ENCODE measurements at regions of chr1 and their contacts with region 1.

Region 1: DNA sequence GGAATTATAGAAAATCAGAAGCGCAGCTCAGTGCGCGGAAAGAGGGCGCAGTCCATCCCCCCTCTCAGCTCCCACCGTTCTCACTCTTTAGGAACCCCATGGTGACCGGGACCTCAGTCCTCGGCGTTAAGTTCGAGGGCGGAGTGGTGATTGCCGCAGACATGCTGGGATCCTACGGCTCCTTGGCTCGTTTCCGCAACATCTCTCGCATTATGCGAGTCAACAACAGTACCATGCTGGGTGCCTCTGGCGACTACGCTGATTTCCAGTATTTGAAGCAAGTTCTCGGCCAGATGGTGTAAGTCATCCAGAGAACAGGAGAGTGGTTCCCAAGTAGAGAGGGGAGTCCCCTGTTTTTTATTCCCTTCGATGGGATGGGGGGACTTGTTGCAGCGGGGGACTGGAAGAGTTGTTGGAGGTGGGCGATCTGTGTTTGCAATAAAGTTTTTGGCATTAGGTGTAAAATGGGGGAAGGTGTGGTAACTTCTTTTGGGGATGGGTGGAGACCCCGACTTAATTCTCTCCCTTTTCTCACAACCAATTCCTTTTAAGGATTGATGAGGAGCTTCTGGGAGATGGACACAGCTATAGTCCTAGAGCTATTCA is 620 bp downstream of the PSMB4 start:
- DNase-seq: no peak
- ATAC-seq: peak; percentile 42
- H3K4me3 ChIP-seq: peak overlapping the region; percentile 88
- H3K27ac ChIP-seq: peak overlapping the region; percentile 83
- H3K4me1 ChIP-seq: peaks cover 9% of the 10 kb centered on the region
- H3K27me3 ChIP-seq: no peaks in the 10 kb centered on the region
- CTCF ChIP-seq: no peak
- EP300 ChIP-seq: no peak
- POLR2A ChIP-seq: no peak; the same call in 1 of the 2 replicates
- RAD21 ChIP-seq: no peak

Region 2: GRCh38 chr1:151198255-151199127 is 201.5 kb before region 1 on chr1 and contains the start of gene PIP5K1A:
- CTCF ChIA-PET with region 1: no interaction called
- POLR2A ChIA-PET with region 1: no interaction called
- RAD21 ChIA-PET with region 1: no interaction called
- SMC1A ChIA-PET with region 1: no interaction called
- in situ Hi-C with region 1: no loop called
- intact Hi-C with region 1: loop called (anchors 2 kb)
- DNase-seq: peak; percentile 93
- ATAC-seq: peak; percentile 92
- H3K4me3 ChIP-seq: peak within 1 kb of the TSS; percentile 98
- H3K27ac ChIP-seq: peak within 1 kb of the TSS; percentile 82
- H3K4me1 ChIP-seq: peaks cover 4% of the 10 kb centered on the region; the same call in 1 of the 2 replicates
- H3K27me3 ChIP-seq: no peaks in the 10 kb centered on the region
- CTCF ChIP-seq: no peak
- EP300 ChIP-seq: peak in 1 of 2 experiments; percentile 36; a peak in 1 of 4 replicates
- POLR2A ChIP-seq: peak; percentile 86
- RAD21 ChIP-seq: no peak
- polyA plus RNA-seq, gene PIP5K1A: 4.5 to 5.8 TPM

Region 3: DNA sequence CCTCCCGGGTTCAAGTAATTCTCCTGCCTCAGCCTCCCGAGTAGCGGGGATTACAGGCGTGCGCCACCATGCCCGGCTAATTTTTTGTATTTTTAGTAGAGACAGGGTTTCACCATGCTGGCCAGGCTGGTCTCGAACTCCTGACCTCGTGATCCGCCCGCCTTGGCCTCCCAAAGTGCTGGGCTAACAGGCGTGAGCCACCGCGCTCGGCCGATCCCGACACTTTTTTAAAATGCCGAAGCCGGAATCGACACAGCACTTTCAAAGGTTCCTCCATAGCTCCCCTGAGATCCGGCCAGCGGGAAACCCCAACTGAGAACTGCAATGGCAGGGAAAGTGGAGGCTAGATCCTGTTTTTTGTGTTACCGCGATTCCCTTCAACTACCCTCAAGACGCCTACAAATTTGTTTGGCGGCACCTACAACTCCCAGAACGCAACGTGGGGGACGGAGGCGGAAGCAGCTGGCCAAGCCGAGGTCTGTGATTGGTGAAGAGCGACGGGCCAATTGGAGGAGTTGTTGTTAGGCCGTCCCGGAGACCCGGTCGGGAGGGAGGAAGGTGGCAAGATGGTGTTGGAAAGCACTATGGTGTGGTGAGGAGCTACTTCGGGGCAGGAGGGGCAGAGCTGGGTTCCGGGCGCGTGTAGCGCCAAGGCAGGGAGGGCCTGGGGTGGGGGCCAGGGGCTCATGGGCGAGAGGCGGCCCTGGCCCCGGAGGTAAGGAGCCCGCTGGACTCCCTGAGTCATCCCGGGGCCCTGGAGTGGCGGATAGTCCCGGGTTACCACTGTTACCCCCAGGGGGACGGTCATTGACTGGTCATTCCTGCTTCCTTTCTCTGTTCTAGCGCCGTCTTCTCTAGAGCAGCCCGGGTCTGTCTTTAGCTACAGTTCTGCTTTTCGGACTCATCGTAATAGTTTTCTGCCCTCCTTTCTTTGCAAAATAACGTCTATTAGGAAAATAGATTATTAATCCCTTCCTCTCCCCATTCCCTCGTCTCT is 145.5 kb before region 1 on chr1 and contains the start of gene PSMD4:
- CTCF ChIA-PET with region 1: interaction called, 14 read pairs
- POLR2A ChIA-PET with region 1: interaction called, 5 read pairs
- RAD21 ChIA-PET with region 1: no interaction called
- SMC1A ChIA-PET with region 1: interaction called, 4 read pairs
- in situ Hi-C with region 1: no loop called
- intact Hi-C with region 1: no loop called
- DNase-seq: peak; percentile 96
- ATAC-seq: peak; percentile 95
- H3K4me3 ChIP-seq: peak within 1 kb of the TSS; percentile 81
- H3K27ac ChIP-seq: peak within 1 kb of the TSS; percentile 87
- H3K4me1 ChIP-seq: peaks cover 2% of the 10 kb centered on the region; the same call in 1 of the 2 replicates
- H3K27me3 ChIP-seq: no peaks in the 10 kb centered on the region
- CTCF ChIP-seq: no peak
- EP300 ChIP-seq: no peak
- POLR2A ChIP-seq: peak; percentile 94
- RAD21 ChIP-seq: no peak
- polyA plus RNA-seq, gene PSMD4: 129 to 190 TPM

Region 4: DNA sequence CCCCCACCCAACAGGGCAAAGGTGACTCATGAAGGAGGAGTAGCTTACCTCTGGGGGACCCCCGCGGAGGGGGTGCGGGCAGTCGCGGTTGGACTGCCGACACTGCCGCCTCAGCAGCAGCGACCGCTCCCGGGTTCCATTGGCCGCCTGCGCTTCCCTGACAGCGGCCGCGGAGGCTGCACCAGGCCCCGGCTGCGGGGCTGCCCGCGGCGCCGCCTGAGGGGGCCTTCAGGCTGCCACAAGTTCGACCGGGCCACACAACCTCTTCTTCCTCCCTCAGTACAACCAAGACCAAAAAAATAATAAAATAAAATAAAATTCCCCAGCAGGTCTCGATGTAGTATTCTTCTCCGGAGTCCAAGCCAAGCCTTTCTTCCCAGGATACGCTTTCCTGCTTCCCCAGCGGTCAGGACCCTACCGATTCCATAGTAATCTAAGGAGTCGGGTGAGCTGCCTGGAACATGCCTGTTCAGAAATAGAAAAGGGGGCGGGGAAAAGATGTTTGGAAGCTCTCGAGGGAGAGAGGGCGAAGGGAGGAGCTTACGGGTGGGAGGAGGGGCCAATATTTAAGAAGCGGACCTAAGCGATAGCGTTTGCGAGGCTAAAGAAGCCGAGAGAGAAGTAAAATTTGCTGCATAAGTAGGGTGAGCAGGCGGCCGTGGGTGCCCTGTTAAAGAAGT is 72.6 kb before region 1 on chr1 and contains the start of gene PI4KB:
- CTCF ChIA-PET with region 1: interaction called, 4 read pairs
- POLR2A ChIA-PET with region 1: interaction called, 12 read pairs
- RAD21 ChIA-PET with region 1: interaction called, 22 read pairs
- SMC1A ChIA-PET with region 1: interaction called, 12 read pairs
- in situ Hi-C with region 1: no loop called
- intact Hi-C with region 1: no loop called
- DNase-seq: peak; percentile 83
- ATAC-seq: peak; percentile 93
- H3K4me3 ChIP-seq: peak within 1 kb of the TSS; percentile 74
- H3K27ac ChIP-seq: peak within 1 kb of the TSS; percentile 95
- H3K4me1 ChIP-seq: peaks cover 9% of the 10 kb centered on the region; the same call in 1 of the 2 replicates
- H3K27me3 ChIP-seq: no peaks in the 10 kb centered on the region
- CTCF ChIP-seq: no peak
- EP300 ChIP-seq: no peak
- POLR2A ChIP-seq: peak; percentile 83
- RAD21 ChIP-seq: no peak
- polyA plus RNA-seq, gene PI4KB: 3.3 to 7.2 TPM

Region 5: GRCh38 chr1:151346769-151347522 is 53.0 kb before region 1 on chr1 and contains the start of gene RFX5:
- CTCF ChIA-PET with region 1: interaction called, 21 read pairs
- POLR2A ChIA-PET with region 1: interaction called, 8 read pairs
- RAD21 ChIA-PET with region 1: interaction called, 4 read pairs
- SMC1A ChIA-PET with region 1: interaction called, 16 read pairs
- in situ Hi-C with region 1: no loop called
- intact Hi-C with region 1: loop called (anchors 2 kb)
- DNase-seq: peak; percentile 98
- ATAC-seq: peak; percentile 97
- H3K4me3 ChIP-seq: peak within 1 kb of the TSS; percentile 81
- H3K27ac ChIP-seq: peak within 1 kb of the TSS; percentile 99
- H3K4me1 ChIP-seq: peaks cover 7% of the 10 kb centered on the region
- H3K27me3 ChIP-seq: no peaks in the 10 kb centered on the region
- CTCF ChIP-seq: no peak
- EP300 ChIP-seq: peak; percentile 75 to 93
- POLR2A ChIP-seq: peak; percentile 67
- RAD21 ChIP-seq: no peak
- polyA plus RNA-seq, gene RFX5: 14.1 to 18.4 TPM

Region 6: GRCh38 chr1:151419819-151420218 is 19.8 kb after region 1 on chr1:
- CTCF ChIA-PET with region 1: no interaction called
- POLR2A ChIA-PET with region 1: no interaction called
- RAD21 ChIA-PET with region 1: no interaction called
- SMC1A ChIA-PET with region 1: interaction called, 4 read pairs
- in situ Hi-C with region 1: no loop called
- intact Hi-C with region 1: loop called (anchors 2 kb)
- DNase-seq: no peak
- ATAC-seq: no peak
- H3K4me3 ChIP-seq: no peak overlapping the region
- H3K27ac ChIP-seq: no peak overlapping the region
- H3K4me1 ChIP-seq: no peaks in the 10 kb centered on the region
- H3K27me3 ChIP-seq: no peaks in the 10 kb centered on the region
- CTCF ChIP-seq: no peak
- EP300 ChIP-seq: no peak
- POLR2A ChIP-seq: no peak
- RAD21 ChIP-seq: no peak

Measured in GM12878 (cell line).